ENCODE measurements at regions of chr1 and their contacts with region 1.

Region 1: GRCh38 chr1:8848663-8849386 is 29.7 kb downstream of the ENO1 start:
- DNase-seq: peak; percentile 69 to 96
- H3K4me3 ChIP-seq: no peak overlapping the region
- H3K27ac ChIP-seq: no peak overlapping the region
- H3K4me1 ChIP-seq: peaks cover 0 to 4% (median 0%) of the 10 kb centered on the region in 4 experiments; a peak in 2 of 7 replicates
- H3K27me3 ChIP-seq: no peaks in the 10 kb centered on the region
- CTCF ChIP-seq: peak; percentile 88 to 99 (median 98)
- EP300 ChIP-seq: no peak
- POLR2A ChIP-seq: no peak
- RAD21 ChIP-seq: peak; percentile 88 to 93

Region 2: GRCh38 chr1:8727809-8728213 is 121.0 kb before region 1 on chr1:
- CTCF ChIA-PET with region 1: interaction called, 24 read pairs
- POLR2A ChIA-PET with region 1: no interaction called
- DNase-seq: no peak
- H3K4me3 ChIP-seq: no peak overlapping the region
- H3K27ac ChIP-seq: no peak overlapping the region
- H3K4me1 ChIP-seq: peaks cover 0 to 4% (median 2%) of the 10 kb centered on the region in 4 experiments; a peak in 2 of 7 replicates
- H3K27me3 ChIP-seq: no peaks in the 10 kb centered on the region
- CTCF ChIP-seq: no peak
- EP300 ChIP-seq: no peak
- POLR2A ChIP-seq: no peak
- RAD21 ChIP-seq: no peak

Region 3: GRCh38 chr1:8817406-8818324 is 31.2 kb before region 1 on chr1 and contains the start of gene RERE:
- CTCF ChIA-PET with region 1: interaction called, 27 read pairs
- POLR2A ChIA-PET with region 1: interaction called, 4 read pairs
- DNase-seq: peak; percentile 57 to 99
- H3K4me3 ChIP-seq: peak within 1 kb of the TSS; percentile 89 to 95 (median 92)
- H3K27ac ChIP-seq: peak within 1 kb of the TSS; percentile 89
- H3K4me1 ChIP-seq: peaks cover 3 to 10% (median 5%) of the 10 kb centered on the region in 4 experiments; a peak in 6 of 7 replicates
- H3K27me3 ChIP-seq: no peaks in the 10 kb centered on the region
- CTCF ChIP-seq: no peak
- EP300 ChIP-seq: no peak
- POLR2A ChIP-seq: peak; percentile 70 to 91
- RAD21 ChIP-seq: no peak
- total RNA-seq, gene RERE: 126 and 142 TPM in 2 replicates

Region 4: DNA sequence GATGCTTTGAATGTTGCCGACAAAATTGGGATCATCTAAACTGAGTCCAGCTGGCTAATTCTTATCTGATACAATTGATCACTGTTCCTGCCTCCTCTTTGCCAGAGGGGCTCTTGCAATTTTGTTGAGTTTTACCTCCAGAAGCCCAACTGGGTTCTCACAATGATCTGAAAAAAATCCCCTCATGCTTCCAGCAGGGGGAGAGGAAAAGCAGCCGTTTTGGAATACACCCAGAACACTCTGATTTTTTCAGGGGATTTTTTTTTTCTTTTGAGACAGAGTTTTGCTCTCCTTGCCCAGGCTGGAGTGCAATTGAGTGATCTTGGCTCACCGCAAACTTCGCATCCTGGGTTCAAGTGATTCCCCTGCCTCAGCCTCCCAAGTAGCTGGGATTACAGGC is 17.5 kb before region 1 on chr1:
- CTCF ChIA-PET with region 1: interaction called, 32 read pairs
- POLR2A ChIA-PET with region 1: interaction called, 5 read pairs
- DNase-seq: no peak
- H3K4me3 ChIP-seq: no peak overlapping the region
- H3K27ac ChIP-seq: no peak overlapping the region
- H3K4me1 ChIP-seq: no peaks in the 10 kb centered on the region
- H3K27me3 ChIP-seq: no peaks in the 10 kb centered on the region
- CTCF ChIP-seq: peak in 2 of 3 experiments; percentile 41 to 47; a peak in 2 of 4 replicates
- EP300 ChIP-seq: no peak
- POLR2A ChIP-seq: no peak
- RAD21 ChIP-seq: peak; percentile 14 to 44; a peak in 3 of 4 replicates

Region 5: GRCh38 chr1:8878448-8879347 is 29.9 kb after region 1 on chr1 and contains the start of gene ENO1:
- CTCF ChIA-PET with region 1: interaction called, 9 read pairs
- POLR2A ChIA-PET with region 1: interaction called, 880 read pairs
- DNase-seq: peak; percentile 90 to 100
- H3K4me3 ChIP-seq: peak within 1 kb of the TSS; percentile 90 to 97 (median 92)
- H3K27ac ChIP-seq: peak within 1 kb of the TSS; percentile 92
- H3K4me1 ChIP-seq: peaks cover 6 to 21% (median 15%) of the 10 kb centered on the region in 4 experiments
- H3K27me3 ChIP-seq: no peaks in the 10 kb centered on the region
- CTCF ChIP-seq: no peak
- EP300 ChIP-seq: no peak
- POLR2A ChIP-seq: peak; percentile 87 to 89
- RAD21 ChIP-seq: no peak
- total RNA-seq, gene ENO1: 2,080 and 2,117 TPM in 2 replicates

Region 6: GRCh38 chr1:8976896-8977450 is 128.1 kb after region 1 on chr1:
- CTCF ChIA-PET with region 1: no interaction called
- POLR2A ChIA-PET with region 1: no interaction called
- DNase-seq: no peak
- H3K4me3 ChIP-seq: no peak overlapping the region
- H3K27ac ChIP-seq: no peak overlapping the region
- H3K4me1 ChIP-seq: peaks cover 0 to 2% (median 0%) of the 10 kb centered on the region in 4 experiments; a peak in 1 of 7 replicates
- H3K27me3 ChIP-seq: no peaks in the 10 kb centered on the region
- CTCF ChIP-seq: no peak
- EP300 ChIP-seq: no peak
- POLR2A ChIP-seq: no peak
- RAD21 ChIP-seq: no peak

Measured in H1 (cell line).